ENCODE measurements at regions of chr4 and their contacts with region 1.

Region 1: DNA sequence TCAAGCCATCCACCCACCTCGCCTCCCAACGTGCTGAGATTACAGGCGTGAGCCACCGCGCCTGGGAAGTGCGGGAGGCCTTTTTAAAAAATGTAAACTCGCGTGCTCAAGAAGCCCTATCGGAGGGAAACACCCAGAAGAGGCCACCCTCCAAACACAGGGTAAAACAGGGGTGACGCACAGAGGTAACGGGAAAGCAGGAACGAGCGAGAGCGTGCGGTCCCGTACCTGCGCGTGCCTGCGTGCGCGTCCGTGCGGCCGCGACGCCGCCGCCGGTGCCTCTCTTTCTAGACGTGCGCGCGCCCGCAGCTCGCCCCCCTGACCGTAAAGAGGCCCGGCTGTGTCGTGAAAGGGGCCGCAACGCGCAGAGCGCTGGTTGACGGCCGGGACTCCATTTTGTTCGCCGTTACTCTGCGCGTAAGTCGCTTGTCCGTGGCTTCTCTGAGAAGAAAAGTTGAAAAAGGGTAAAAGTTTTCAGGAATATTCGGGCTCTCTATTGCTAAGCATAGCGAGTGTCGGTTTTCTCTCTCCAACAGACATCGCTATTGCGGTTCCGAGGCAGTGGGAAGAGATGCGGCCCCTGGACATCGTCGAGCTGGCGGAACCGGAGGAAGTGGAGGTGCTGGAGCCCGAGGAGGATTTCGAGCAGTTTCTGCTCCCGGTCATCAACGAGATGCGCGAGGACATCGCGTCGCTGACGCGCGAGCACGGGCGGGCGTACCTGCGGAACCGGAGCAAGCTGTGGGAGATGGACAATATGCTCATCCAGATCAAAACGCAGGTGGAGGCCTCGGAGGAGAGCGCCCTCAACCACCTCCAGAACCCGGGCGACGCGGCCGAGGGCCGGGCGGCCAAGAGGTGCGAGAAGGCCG is at the start of gene MRFAP1:
- DNase-seq: peak; percentile 92 to 98
- ATAC-seq: peak; percentile 80 to 96 (median 86)
- H3K4me3 ChIP-seq: peak within 1 kb of the TSS; percentile 92
- H3K4me3 Mint-ChIP-seq: peak within 1 kb of the TSS; percentile 100
- H3K27ac ChIP-seq: peak within 1 kb of the TSS; percentile 95
- H3K27ac Mint-ChIP-seq: peak within 1 kb of the TSS; percentile 100
- H3K4me1 ChIP-seq: peaks cover 27% of the 10 kb centered on the region
- H3K4me1 Mint-ChIP-seq: peaks cover 37 to 41% of the 10 kb centered on the region in 2 donors
- H3K27me3 ChIP-seq: no peaks in the 10 kb centered on the region
- H3K27me3 Mint-ChIP-seq: no peaks in the 10 kb centered on the region
- CTCF ChIP-seq: no peak
- total RNA-seq, gene MRFAP1: 105 to 146 (median 146) TPM

Region 2: GRCh38 chr4:6688879-6689505 is 48.5 kb after region 1 on chr4:
- intact Hi-C with region 1: loop called (anchors 2 kb)
- DNase-seq: peak; percentile 79 to 84
- ATAC-seq: peak; percentile 80 to 85 (median 82)
- H3K4me3 ChIP-seq: peak overlapping the region; percentile 45
- H3K4me3 Mint-ChIP-seq: peak overlapping the region; percentile 98
- H3K27ac ChIP-seq: peak overlapping the region; percentile 77
- H3K27ac Mint-ChIP-seq: peak overlapping the region; percentile 97 to 98
- H3K4me1 ChIP-seq: peaks cover 83% of the 10 kb centered on the region
- H3K4me1 Mint-ChIP-seq: peaks cover 53 to 80% of the 10 kb centered on the region in 2 donors
- H3K27me3 ChIP-seq: no peaks in the 10 kb centered on the region
- H3K27me3 Mint-ChIP-seq: no peaks in the 10 kb centered on the region
- CTCF ChIP-seq: no peak

Region 3: GRCh38 chr4:6709230-6710114 is 68.9 kb after region 1 on chr4 and contains the start of gene MRFAP1L1:
- intact Hi-C with region 1: loop called (anchors 2 kb)
- DNase-seq: peak; percentile 96 to 98
- ATAC-seq: peak; percentile 86 to 99 (median 92)
- H3K4me3 ChIP-seq: peak within 1 kb of the TSS; percentile 94
- H3K4me3 Mint-ChIP-seq: peak within 1 kb of the TSS; percentile 99
- H3K27ac ChIP-seq: peak within 1 kb of the TSS; percentile 87
- H3K27ac Mint-ChIP-seq: peak within 1 kb of the TSS; percentile 98 to 100
- H3K4me1 ChIP-seq: peaks cover 27% of the 10 kb centered on the region
- H3K4me1 Mint-ChIP-seq: peaks cover 69 to 70% of the 10 kb centered on the region in 2 donors
- H3K27me3 ChIP-seq: no peaks in the 10 kb centered on the region
- H3K27me3 Mint-ChIP-seq: no peaks in the 10 kb centered on the region
- CTCF ChIP-seq: no peak
- total RNA-seq, gene MRFAP1L1: 38.4 to 60.9 (median 40.8) TPM

Region 4: GRCh38 chr4:6716018-6716911 is 75.7 kb after region 1 on chr4 and contains the start of gene BLOC1S4:
- intact Hi-C with region 1: loop called (anchors 1 kb)
- DNase-seq: peak; percentile 88 to 99
- ATAC-seq: peak; percentile 84 to 94 (median 86)
- H3K4me3 ChIP-seq: peak within 1 kb of the TSS; percentile 81
- H3K4me3 Mint-ChIP-seq: peak within 1 kb of the TSS; percentile 98
- H3K27ac ChIP-seq: peak within 1 kb of the TSS; percentile 83
- H3K27ac Mint-ChIP-seq: peak within 1 kb of the TSS; percentile 98
- H3K4me1 ChIP-seq: peaks cover 27% of the 10 kb centered on the region
- H3K4me1 Mint-ChIP-seq: peaks cover 29 to 32% of the 10 kb centered on the region in 2 donors
- H3K27me3 ChIP-seq: no peaks in the 10 kb centered on the region
- H3K27me3 Mint-ChIP-seq: no peaks in the 10 kb centered on the region
- CTCF ChIP-seq: no peak
- total RNA-seq, gene BLOC1S4: 18.9 to 20.1 (median 20.0) TPM